Mucosa of descending colon (tissue), 3 donors: ENCODE measurements at regions of chr6 and their contacts with region 1.

Region 1: DNA sequence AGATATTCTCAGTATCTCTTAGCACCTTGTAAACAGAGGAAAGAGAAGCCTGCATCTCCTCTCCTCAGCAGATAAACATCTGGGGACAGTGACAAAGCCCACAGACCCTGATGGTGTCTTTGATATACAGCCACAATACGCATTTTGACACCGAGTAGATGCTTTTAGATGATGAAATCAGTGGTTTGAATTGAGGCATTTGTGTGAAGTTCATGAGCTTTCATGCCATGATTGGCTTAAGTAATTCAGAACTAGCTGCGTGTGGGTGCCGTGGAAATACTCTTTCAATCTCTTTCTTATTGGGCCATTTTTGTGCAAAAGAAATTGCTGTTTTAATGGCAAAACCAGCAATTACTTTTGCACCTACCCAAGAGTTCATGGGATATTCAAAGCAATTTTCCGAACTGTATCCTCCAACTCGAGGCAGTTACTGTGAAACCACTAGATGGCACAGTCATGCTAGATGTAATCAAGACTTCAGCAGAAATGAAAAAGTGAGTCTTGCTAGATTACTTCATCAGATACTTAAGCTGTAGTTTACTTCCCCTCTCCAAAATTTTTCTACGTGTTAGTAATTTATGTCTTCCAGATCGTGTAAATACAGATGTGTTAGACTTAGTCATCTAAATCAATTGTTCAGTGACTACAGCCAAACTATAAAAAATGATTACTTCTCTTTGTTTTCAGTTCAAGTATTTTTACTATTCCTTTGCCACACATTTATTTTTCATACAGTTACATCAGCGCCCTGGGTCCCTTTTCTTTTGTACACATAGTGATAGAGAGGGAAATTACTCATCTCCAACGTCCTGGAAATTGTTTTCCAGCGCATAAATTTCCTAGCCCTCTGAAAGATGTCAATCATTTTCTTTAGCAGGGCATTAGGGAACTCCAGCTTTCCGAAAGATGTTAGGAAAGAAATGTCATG is 49.4 kb downstream of the IYD start:
- DNase-seq: peak in 1 of 3 donors; percentile 65
- ATAC-seq: peak; percentile 88
- H3K4me3 ChIP-seq: no peak overlapping the region
- H3K4me1 ChIP-seq: peaks cover 11% of the 10 kb centered on the region
- CTCF ChIP-seq: peak; percentile 59

Region 2: DNA sequence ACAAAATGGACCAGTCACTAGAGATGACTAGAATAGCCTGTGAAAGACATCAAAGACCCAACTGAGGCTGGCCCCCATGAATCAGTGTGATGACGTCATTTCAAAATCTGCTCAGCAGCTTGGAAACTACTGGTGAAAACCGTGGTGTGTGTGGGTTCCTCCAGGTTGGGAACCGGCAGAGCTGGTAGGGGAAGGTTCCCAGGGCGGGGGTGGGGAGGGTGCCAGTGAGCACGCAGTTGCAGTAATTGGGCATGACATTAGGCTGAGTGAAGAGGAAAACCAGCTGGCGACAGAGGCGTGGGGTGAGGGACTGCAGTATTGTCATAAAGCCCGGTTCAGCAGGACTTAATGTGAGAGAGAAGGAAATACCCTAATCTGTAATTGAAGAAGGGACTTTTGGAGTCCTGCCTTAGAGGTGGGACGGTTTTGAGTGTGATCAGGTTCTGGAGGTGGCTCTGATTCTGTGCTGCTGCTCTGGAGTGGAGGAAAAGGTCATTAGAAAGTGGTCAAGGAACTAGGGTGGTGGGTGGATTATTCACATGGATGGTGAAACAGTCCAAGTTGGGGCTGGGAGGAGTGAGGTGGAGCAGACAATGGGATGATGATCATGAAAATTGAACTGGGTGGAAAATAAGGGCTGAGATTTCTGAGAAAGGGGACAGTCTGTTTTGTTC is 395.3 kb after region 1 on chr6:
- intact Hi-C with region 1: loop called (anchors 2 to 5 kb)
- DNase-seq: no peak
- ATAC-seq: peak; percentile 46
- H3K4me3 ChIP-seq: no peak overlapping the region
- H3K4me1 ChIP-seq: peaks cover 5% of the 10 kb centered on the region
- CTCF ChIP-seq: no peak